Caco-2 (cell line): ENCODE measurements at regions of chr6 and their contacts with region 1.

Region 1: DNA sequence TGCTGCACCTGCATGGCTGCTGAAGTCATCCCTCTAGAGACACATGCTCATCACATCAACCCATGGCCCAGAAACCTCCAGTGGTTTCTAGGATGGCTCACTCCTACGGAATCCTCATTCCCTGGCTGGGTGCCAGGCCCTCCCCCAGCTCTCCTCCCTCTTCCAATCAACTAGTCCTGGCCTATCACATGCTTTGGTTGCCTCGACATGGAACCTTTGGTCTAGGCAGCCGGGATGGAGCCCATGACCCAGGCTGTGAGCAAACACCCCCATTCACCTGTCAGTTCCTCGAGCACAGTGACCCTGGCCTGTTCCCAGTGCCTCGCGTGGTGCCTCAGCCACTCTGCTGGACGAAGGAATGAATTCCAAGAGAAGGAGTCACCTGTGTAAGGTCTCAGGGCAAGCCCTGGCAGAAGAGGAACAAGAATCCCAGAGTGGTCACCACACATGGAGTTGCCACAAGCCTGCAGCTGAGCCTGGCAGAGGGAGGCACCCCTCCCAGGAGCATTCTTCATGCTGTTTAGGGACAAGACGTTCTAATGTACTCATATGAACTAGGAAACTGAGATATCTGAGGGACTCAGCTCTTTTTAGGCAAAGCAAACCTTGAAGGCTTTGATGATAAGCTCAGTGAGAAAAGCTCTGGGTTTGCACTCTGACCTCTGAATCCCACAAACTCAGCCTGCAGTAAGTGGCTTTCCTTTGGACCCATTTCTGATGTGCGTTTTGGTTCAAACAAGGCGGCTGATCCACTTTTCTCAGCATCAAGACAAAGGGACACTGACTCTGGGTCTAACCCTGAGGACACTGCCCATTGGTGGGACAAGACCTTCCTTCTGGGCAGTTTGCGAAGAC is 40.2 kb downstream of the PPP1R3G start:
- DNase-seq: peak; percentile 22 to 55
- H3K4me3 ChIP-seq: no peak overlapping the region
- H3K4me3 Mint-ChIP-seq: no peak overlapping the region
- H3K27ac Mint-ChIP-seq: peak overlapping the region; percentile 74
- H3K4me1 ChIP-seq: peaks cover 35% of the 10 kb centered on the region
- H3K4me1 Mint-ChIP-seq: peaks cover 26% of the 10 kb centered on the region
- H3K27me3 ChIP-seq: no peaks in the 10 kb centered on the region
- H3K27me3 Mint-ChIP-seq: no peaks in the 10 kb centered on the region
- CTCF ChIP-seq: no peak

Region 2: GRCh38 chr6:5084360-5085192 is 40.8 kb before region 1 on chr6:
- CTCF ChIA-PET with region 1: no interaction called
- POLR2A ChIA-PET with region 1: no interaction called
- intact Hi-C with region 1: loop called (anchors 5 kb)
- DNase-seq: peak in 1 of 2 experiments; percentile 31
- H3K4me3 ChIP-seq: peak overlapping the region; percentile 68
- H3K4me3 Mint-ChIP-seq: peak overlapping the region; percentile 83
- H3K27ac Mint-ChIP-seq: no peak overlapping the region
- H3K4me1 ChIP-seq: 0 out of 2 replicates have a peak, but pooled peaks cover 2% of the 10 kb centered on the region
- H3K4me1 Mint-ChIP-seq: peaks cover 7% of the 10 kb centered on the region
- H3K27me3 ChIP-seq: no peaks in the 10 kb centered on the region
- H3K27me3 Mint-ChIP-seq: no peaks in the 10 kb centered on the region
- CTCF ChIP-seq: no peak

Region 3: DNA sequence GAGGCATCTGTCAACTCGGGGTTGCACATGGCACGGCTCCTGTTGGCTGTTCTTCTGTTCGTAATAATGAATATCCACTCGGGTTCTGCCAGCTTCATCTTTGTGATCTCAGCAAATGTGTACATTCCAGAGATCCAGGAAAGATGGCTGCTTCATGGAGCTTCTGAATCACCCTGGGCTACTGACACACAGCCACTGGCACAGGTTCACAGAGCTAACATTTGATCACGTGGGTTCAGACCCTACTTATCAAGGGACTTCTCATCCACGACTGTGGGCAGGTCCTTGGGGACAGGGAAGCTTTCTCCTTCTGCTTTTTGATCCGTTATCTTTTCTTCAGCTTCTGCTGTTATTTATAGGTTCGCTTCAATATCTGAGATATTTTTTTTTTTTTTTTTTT is 22.1 kb before region 1 on chr6:
- CTCF ChIA-PET with region 1: no interaction called
- POLR2A ChIA-PET with region 1: no interaction called
- intact Hi-C with region 1: no loop called
- DNase-seq: no peak
- H3K4me3 ChIP-seq: no peak overlapping the region
- H3K4me3 Mint-ChIP-seq: no peak overlapping the region
- H3K27ac Mint-ChIP-seq: no peak overlapping the region
- H3K4me1 ChIP-seq: no peaks in the 10 kb centered on the region
- H3K4me1 Mint-ChIP-seq: no peaks in the 10 kb centered on the region
- H3K27me3 ChIP-seq: no peaks in the 10 kb centered on the region
- H3K27me3 Mint-ChIP-seq: no peaks in the 10 kb centered on the region
- CTCF ChIP-seq: no peak

Region 4: GRCh38 chr6:5214570-5215052 is 89.2 kb after region 1 on chr6:
- CTCF ChIA-PET with region 1: no interaction called
- POLR2A ChIA-PET with region 1: no interaction called
- intact Hi-C with region 1: no loop called
- DNase-seq: peak in 1 of 2 experiments; percentile 68
- H3K4me3 ChIP-seq: no peak overlapping the region
- H3K4me3 Mint-ChIP-seq: no peak overlapping the region
- H3K27ac Mint-ChIP-seq: no peak overlapping the region
- H3K4me1 ChIP-seq: no peaks in the 10 kb centered on the region
- H3K4me1 Mint-ChIP-seq: no peaks in the 10 kb centered on the region
- H3K27me3 ChIP-seq: no peaks in the 10 kb centered on the region
- H3K27me3 Mint-ChIP-seq: no peaks in the 10 kb centered on the region
- CTCF ChIP-seq: peak; percentile 57 to 60